Activated CD4-positive, alpha-beta memory T cell treated with anti-CD3 and anti-CD28 coated beads for 36 hours (primary cell): ENCODE measurements at regions of chr1 and their contacts with region 1.

Region 1: DNA sequence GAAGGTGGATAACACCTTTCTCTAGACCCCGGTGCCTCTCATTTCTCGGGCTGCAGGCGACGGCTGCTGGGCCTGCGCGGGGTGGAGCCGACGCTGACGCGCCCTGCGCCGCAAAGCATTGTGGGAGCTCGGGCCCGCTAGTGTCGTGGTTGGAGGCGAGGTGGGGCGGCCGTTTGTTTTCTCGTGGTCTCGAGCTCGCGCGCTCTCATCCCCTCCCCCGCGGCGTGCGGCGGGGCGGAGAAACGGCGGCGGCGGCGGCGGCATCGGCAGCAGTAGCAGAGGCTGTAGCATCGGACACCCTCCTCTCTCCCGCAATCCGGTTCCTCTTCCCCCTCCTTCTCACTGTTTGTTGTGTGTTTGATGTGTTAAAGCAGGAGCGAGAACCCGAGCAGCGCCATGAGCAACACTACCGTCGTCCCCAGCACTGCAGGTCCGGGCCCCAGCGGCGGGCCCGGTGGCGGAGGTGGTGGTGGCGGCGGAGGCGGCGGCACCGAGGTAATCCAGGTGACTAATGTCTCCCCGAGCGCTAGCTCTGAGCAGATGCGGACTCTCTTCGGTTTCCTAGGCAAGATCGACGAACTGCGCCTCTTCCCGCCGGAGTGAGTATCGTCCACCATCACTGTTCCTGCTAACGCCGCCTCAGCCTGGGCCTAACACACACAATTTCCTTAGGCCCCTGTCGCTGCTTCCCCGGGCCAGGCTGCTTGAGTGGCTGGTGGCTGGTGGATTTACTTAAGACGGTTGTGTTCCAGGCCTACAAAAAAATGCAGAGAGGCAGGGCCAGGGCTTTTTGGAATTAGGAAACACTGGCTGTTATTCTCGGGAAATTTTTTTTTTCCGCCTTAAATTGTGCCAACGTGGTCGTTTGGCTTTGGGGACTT is at the start of gene SRSF11:
- DNase-seq: peak; percentile 98
- H3K4me3 Mint-ChIP-seq: peak within 1 kb of the TSS; percentile 91
- H3K27ac Mint-ChIP-seq: peak within 1 kb of the TSS; percentile 97
- H3K4me1 Mint-ChIP-seq: peaks cover 39% of the 10 kb centered on the region
- H3K27me3 Mint-ChIP-seq: no peaks in the 10 kb centered on the region
- total RNA-seq, gene SRSF11: 156 to 164 TPM

Region 2: GRCh38 chr1:70205434-70206118 is 15.9 kb before region 1 on chr1 and contains the start of gene LRRC40:
- CTCF ChIA-PET with region 1: interaction called, 8 read pairs
- POLR2A ChIA-PET with region 1: interaction called, 21 read pairs
- intact Hi-C with region 1: loop called (anchors 1 kb)
- DNase-seq: peak; percentile 98
- H3K4me3 Mint-ChIP-seq: peak within 1 kb of the TSS; percentile 99
- H3K27ac Mint-ChIP-seq: peak within 1 kb of the TSS; percentile 94
- H3K4me1 Mint-ChIP-seq: peaks cover 63% of the 10 kb centered on the region
- H3K27me3 Mint-ChIP-seq: no peaks in the 10 kb centered on the region
- total RNA-seq, gene LRRC40: 22.1 to 24.7 TPM

Region 3: DNA sequence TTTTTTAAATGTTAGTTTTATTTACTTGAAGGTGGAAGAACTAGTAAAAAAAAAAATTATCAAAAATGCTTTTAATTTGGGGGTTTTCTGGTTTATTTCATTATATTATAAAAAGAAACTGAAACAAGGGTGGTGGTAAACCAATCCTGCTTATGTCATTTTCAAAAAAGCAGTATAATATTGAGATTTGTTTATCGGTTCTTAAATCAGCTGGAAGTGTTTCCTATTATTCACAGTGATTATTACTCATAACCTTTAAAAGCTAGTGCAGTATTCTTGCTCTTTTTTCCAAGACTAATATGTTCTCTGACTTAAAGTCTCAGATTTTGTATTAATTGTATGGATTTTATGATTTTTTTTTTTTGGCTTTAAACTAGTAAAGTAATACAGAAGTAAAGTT is 10.7 kb before region 1 on chr1:
- CTCF ChIA-PET with region 1: interaction called, 8 read pairs
- POLR2A ChIA-PET with region 1: interaction called, 21 read pairs
- intact Hi-C with region 1: loop called (anchors 1 kb)
- DNase-seq: no peak
- H3K4me3 Mint-ChIP-seq: no peak overlapping the region
- H3K27ac Mint-ChIP-seq: no peak overlapping the region
- H3K4me1 Mint-ChIP-seq: peaks cover 46% of the 10 kb centered on the region
- H3K27me3 Mint-ChIP-seq: no peaks in the 10 kb centered on the region

Region 4: DNA sequence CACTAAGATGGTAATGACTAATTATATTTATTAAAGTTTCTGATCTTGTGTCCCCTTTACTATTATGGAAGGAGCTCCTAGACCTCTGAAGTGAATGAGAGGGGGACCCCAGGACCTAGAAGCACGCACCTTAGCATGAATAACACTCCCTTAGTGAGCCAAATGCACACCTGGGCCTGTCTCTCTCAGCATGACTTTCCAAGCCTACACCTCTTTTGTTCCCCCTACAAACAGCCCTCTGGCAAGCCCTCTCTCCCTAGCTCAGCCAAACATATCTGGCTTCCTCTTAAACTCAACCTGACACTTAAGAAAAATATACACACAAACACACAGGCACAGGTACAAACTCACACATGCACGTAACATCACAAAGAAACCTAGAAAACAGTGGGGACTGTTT is 182.3 kb after region 1 on chr1:
- CTCF ChIA-PET with region 1: no interaction called
- POLR2A ChIA-PET with region 1: no interaction called
- intact Hi-C with region 1: no loop called
- DNase-seq: no peak
- H3K4me3 Mint-ChIP-seq: no peak overlapping the region
- H3K27ac Mint-ChIP-seq: no peak overlapping the region
- H3K4me1 Mint-ChIP-seq: no peaks in the 10 kb centered on the region
- H3K27me3 Mint-ChIP-seq: peaks cover 7% of the 10 kb centered on the region

Region 5: DNA sequence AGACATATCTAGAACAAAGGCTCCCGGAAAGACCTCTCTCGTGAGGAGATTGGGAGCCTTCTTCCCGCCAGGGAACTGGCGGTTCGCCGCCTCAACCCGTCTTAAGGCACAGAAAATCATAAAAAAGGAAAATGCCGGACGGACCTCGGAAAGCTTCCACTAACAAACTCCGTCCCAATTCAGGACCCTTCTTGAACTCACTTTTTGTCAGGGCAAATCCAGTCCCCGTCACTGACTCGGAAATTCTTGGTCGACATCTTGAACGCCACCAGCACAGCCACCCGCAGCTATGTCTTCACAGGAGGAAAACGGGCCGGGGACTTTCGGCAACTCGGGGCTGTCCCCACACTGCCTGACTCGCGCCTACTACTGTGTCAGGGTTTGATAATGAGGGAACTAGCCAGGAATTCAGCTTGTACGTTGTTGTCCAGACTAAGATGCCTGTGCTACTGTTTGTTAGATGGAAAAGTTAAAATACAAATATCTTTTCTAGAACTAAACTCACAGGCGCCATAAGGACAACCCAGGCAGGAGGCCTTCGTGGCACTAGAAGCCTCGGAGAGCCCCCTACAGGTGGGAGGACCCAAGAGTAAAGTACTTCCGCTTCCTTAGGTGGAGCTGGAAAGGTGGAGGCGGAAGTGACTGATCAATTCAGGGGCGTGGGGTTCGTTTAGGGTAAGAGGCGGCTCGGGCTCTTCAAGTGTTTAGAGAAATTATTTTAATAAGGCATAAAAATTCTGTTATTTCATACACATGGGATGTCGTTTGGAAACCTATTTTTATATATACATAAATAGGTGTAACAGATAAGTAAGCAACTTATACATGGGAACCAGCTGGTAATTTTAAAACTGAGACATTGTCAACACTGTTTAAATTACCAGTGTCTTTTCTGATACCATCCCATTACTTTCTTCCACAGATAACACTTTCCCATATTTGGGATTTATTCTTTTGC is 859.5 kb after region 1 on chr1 and contains the start of gene ZRANB2:
- CTCF ChIA-PET with region 1: no interaction called
- POLR2A ChIA-PET with region 1: no interaction called
- intact Hi-C with region 1: loop called (anchors 1 kb)
- DNase-seq: peak; percentile 91
- H3K4me3 Mint-ChIP-seq: peak within 1 kb of the TSS; percentile 98
- H3K27ac Mint-ChIP-seq: peak within 1 kb of the TSS; percentile 99
- H3K4me1 Mint-ChIP-seq: peaks cover 20% of the 10 kb centered on the region
- H3K27me3 Mint-ChIP-seq: peaks cover 16% of the 10 kb centered on the region
- total RNA-seq, gene ZRANB2: 105 to 107 TPM